Psoas muscle (tissue), 8 donors: ENCODE measurements at regions of chr4 and their contacts with region 1.

Region 1: DNA sequence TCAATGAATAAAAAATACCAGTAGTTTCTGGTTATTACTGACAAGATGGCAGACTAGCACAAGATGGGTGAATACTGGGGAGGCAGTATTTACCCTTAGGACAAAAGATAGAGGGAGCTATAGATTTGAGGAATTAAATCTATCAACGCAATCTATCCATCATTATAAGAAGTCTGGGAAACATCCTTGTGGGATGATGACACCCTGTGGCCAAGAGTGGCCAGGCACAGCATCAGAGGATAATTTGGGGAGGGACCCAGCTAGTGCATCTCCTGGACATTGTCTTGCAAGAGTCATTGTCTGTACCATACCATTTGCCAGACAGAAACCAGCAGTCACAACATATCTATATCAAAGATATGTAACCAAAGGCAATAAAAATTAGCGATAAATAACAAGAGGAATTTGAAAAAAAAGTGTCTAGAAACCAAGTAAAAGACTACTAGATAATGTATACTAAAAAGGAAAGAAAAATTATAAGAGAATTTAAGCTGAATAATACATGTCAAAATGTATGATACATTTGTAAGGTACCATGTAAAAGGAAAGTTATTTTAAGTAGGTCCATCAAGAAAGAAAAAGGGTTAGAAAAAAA is 22.9 kb downstream of the KCTD8 start:
- DNase-seq: no peak
- ATAC-seq: peak in 2 of 4 donors; percentile 64 to 67
- H3K4me3 ChIP-seq: no peak overlapping the region
- H3K27ac ChIP-seq: no peak overlapping the region
- H3K4me1 ChIP-seq: no peaks in the 10 kb centered on the region
- H3K27me3 ChIP-seq: no peaks in the 10 kb centered on the region
- CTCF ChIP-seq: peak; percentile 52

Region 2: DNA sequence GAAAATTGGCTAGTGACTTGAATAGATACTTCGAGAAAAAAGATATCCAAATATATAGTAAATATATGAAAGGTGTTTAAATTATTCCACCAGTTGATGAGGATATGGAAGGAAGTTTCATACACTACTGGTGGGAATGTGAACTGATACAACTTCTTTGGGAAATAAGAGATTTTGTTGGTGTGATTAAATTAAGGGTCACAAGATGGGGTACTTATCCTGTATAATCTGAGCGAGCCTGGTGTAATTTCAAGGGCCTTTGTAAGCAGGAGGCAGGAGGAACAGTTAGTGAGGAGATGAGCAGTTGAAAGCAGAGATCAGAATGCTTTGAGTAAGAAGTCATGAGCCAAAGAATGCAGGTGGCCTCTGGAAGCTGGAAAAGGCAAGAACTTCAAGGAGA is 169.3 kb before region 1 on chr4:
- intact Hi-C with region 1: loop called in 1 of 2 experiments (anchors 10 kb)
- DNase-seq: no peak
- ATAC-seq: peak; percentile 27 to 44 (median 36)
- H3K4me3 ChIP-seq: no peak overlapping the region
- H3K27ac ChIP-seq: no peak overlapping the region
- H3K4me1 ChIP-seq: peaks cover 7% of the 10 kb centered on the region
- H3K27me3 ChIP-seq: no peaks in the 10 kb centered on the region
- CTCF ChIP-seq: no peak

Region 3: DNA sequence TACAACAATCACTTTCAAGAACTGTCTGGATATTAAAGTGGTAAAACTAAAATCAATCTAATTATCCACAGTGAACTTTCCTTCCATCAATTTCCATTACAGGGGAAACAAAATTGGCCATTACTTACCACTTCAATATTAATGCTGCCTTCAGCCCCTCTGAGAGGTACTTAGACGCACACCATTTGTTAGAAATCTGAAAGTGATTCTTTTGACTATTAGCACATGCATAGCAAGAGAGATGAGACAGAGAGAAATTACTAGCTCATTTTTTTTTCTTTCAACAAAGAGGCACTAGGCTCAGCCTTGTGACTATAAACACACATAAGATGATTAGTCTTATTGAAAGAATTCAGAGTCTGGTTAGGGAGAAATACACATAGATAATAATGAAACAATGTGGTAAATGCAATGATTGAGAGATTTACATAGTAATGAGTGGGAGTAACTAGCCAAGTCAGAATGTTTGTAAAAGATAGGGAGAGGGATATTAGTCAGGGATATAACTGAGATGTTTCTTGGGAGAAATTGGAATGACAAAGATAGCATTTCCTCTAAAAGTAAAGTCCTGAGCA is 132.4 kb after region 1 on chr4:
- intact Hi-C with region 1: no loop called
- DNase-seq: no peak
- ATAC-seq: no peak
- H3K4me3 ChIP-seq: no peak overlapping the region
- H3K27ac ChIP-seq: no peak overlapping the region
- H3K4me1 ChIP-seq: no peaks in the 10 kb centered on the region
- H3K27me3 ChIP-seq: no peaks in the 10 kb centered on the region
- CTCF ChIP-seq: no peak